ENCODE measurements at regions of chr4 and their contacts with region 1.

Region 1: GRCh38 chr4:55345980-55346850 is at the start of gene SRD5A3:
- DNase-seq: peak; percentile 74
- H3K4me3 Mint-ChIP-seq: peak within 1 kb of the TSS; percentile 89
- H3K27ac Mint-ChIP-seq: peak within 1 kb of the TSS; percentile 92
- H3K4me1 Mint-ChIP-seq: peaks cover 36% of the 10 kb centered on the region
- H3K27me3 Mint-ChIP-seq: no peaks in the 10 kb centered on the region
- total RNA-seq, gene SRD5A3: 32.4 and 33.2 TPM in 2 replicates

Region 2: GRCh38 chr4:55291227-55291640 is 55.0 kb before region 1 on chr4:
- intact Hi-C with region 1: no loop called
- DNase-seq: no peak
- H3K4me3 Mint-ChIP-seq: no peak overlapping the region
- H3K27ac Mint-ChIP-seq: no peak overlapping the region
- H3K4me1 Mint-ChIP-seq: no peaks in the 10 kb centered on the region
- H3K27me3 Mint-ChIP-seq: no peaks in the 10 kb centered on the region

Region 3: GRCh38 chr4:55358668-55359067 is 12.5 kb after region 1 on chr4:
- intact Hi-C with region 1: loop called (anchors 1 kb)
- DNase-seq: no peak
- H3K4me3 Mint-ChIP-seq: no peak overlapping the region
- H3K27ac Mint-ChIP-seq: no peak overlapping the region
- H3K4me1 Mint-ChIP-seq: peaks cover 12% of the 10 kb centered on the region
- H3K27me3 Mint-ChIP-seq: no peaks in the 10 kb centered on the region

Region 4: GRCh38 chr4:55554453-55555030 is 208.3 kb after region 1 on chr4:
- intact Hi-C with region 1: loop called (anchors 2 kb)
- DNase-seq: no peak
- H3K4me3 Mint-ChIP-seq: no peak overlapping the region
- H3K27ac Mint-ChIP-seq: no peak overlapping the region
- H3K4me1 Mint-ChIP-seq: peaks cover 11% of the 10 kb centered on the region
- H3K27me3 Mint-ChIP-seq: peaks cover 12% of the 10 kb centered on the region

Region 5: DNA sequence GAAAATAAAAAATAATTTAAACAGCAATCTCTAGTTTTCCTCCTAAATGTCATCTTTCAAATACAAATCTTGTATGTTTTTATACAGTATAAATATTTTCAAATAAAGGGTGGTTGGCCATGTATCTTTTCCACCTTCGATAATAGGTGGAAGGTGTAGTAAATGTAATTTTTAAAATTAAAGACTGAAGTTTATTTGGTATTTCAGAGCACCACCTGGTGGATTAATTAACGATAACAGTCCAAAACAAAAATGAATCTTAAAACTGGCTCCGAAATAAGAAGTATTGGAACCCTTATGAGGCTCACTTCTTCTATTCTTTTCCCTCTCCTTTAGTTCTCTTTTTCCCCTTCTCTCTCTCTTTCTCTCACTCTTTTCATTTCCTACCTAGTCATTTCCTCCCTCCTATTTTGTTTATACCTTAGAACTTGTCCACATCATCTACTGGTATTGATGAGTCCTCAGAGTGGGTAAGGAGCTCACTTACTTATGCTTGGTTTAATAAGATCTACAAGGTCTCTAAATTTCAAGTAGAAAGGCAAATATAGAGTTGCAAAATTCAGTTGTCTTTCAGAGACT is 390.5 kb after region 1 on chr4:
- intact Hi-C with region 1: loop called (anchors 10 kb)
- DNase-seq: no peak
- H3K4me3 Mint-ChIP-seq: no peak overlapping the region
- H3K27ac Mint-ChIP-seq: no peak overlapping the region
- H3K4me1 Mint-ChIP-seq: no peaks in the 10 kb centered on the region
- H3K27me3 Mint-ChIP-seq: peaks cover 16% of the 10 kb centered on the region

Region 6: GRCh38 chr4:55853484-55854046 is 507.4 kb after region 1 on chr4 and contains the start of gene EXOC1:
- intact Hi-C with region 1: loop called (anchors 1 kb)
- DNase-seq: peak; percentile 93
- H3K4me3 Mint-ChIP-seq: peak within 1 kb of the TSS; percentile 37
- H3K27ac Mint-ChIP-seq: peak within 1 kb of the TSS; percentile 53
- H3K4me1 Mint-ChIP-seq: peaks cover 27% of the 10 kb centered on the region
- H3K27me3 Mint-ChIP-seq: peaks cover 2% of the 10 kb centered on the region
- total RNA-seq, gene EXOC1: 18.3 and 18.8 TPM in 2 replicates